ENCODE measurements at regions of chr15 and their contacts with region 1.

Region 1: GRCh38 chr15:81023483-81024264 is 23.0 kb downstream of the TLNRD1 start:
- H3K4me3 Mint-ChIP-seq: peak overlapping the region; percentile 51
- H3K27ac Mint-ChIP-seq: peak overlapping the region; percentile 98
- H3K4me1 Mint-ChIP-seq: peaks cover 52% of the 10 kb centered on the region
- H3K27me3 Mint-ChIP-seq: no peaks in the 10 kb centered on the region

Region 2: GRCh38 chr15:80989518-80990478 is 33.9 kb before region 1 on chr15 and contains the start of gene MESD:
- intact Hi-C with region 1: loop called (anchors 1 kb)
- H3K4me3 Mint-ChIP-seq: peak within 1 kb of the TSS; percentile 90
- H3K27ac Mint-ChIP-seq: peak within 1 kb of the TSS; percentile 97
- H3K4me1 Mint-ChIP-seq: peaks cover 56% of the 10 kb centered on the region
- H3K27me3 Mint-ChIP-seq: peaks cover 3% of the 10 kb centered on the region

Region 3: GRCh38 chr15:81000624-81001151 is 23.0 kb before region 1 on chr15 and contains the start of gene TLNRD1:
- intact Hi-C with region 1: loop called (anchors 1 kb)
- H3K4me3 Mint-ChIP-seq: peak within 1 kb of the TSS; percentile 83
- H3K27ac Mint-ChIP-seq: peak within 1 kb of the TSS; percentile 95
- H3K4me1 Mint-ChIP-seq: peaks cover 40% of the 10 kb centered on the region
- H3K27me3 Mint-ChIP-seq: no peaks in the 10 kb centered on the region

Region 4: GRCh38 chr15:81007428-81008064 is 16.1 kb before region 1 on chr15:
- intact Hi-C with region 1: loop called (anchors 2 kb)
- H3K4me3 Mint-ChIP-seq: no peak overlapping the region
- H3K27ac Mint-ChIP-seq: no peak overlapping the region
- H3K4me1 Mint-ChIP-seq: peaks cover 26% of the 10 kb centered on the region
- H3K27me3 Mint-ChIP-seq: no peaks in the 10 kb centered on the region

Region 5: DNA sequence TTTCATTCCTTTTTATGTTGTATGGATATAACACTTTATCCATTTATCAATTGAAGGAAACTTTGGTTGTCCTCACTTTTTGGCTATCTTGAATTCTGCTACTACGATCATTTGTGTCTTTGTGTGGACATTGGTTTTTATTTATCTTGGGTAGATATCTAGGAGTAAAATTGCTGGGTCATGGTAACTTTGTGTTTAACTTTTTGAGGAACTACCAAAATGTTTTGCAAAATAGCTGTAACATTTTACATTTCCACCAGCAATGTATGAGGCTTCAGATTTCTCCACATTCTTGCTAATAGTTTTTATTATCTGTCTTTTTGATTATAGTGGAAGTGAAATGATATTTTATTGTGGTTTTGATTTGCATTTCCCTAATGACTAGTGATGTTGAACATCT is 32.6 kb after region 1 on chr15:
- intact Hi-C with region 1: loop called (anchors 5 kb)
- H3K4me3 Mint-ChIP-seq: no peak overlapping the region
- H3K27ac Mint-ChIP-seq: peak overlapping the region; percentile 45
- H3K4me1 Mint-ChIP-seq: peaks cover 37% of the 10 kb centered on the region
- H3K27me3 Mint-ChIP-seq: no peaks in the 10 kb centered on the region

Region 6: DNA sequence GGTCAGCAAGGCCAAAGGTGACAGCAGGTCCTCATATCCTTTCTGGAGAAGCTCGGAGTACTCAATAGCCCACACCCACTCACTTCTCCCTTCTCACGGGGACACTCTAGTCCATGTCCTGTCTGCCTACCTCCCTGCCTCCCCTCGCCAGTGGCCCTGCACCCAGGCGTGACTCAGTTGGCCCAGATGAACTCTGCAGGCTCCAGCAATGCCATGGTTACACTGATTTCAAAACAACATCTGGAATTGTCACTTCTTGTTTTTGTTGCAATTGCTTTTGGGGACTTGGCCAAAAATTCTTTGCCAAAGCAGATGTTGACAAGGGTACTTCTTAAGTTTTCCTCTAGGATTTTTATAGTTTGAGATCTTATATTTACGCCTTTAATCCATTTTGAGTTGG is 186.0 kb after region 1 on chr15:
- intact Hi-C with region 1: no loop called
- H3K4me3 Mint-ChIP-seq: no peak overlapping the region
- H3K27ac Mint-ChIP-seq: no peak overlapping the region
- H3K4me1 Mint-ChIP-seq: no peaks in the 10 kb centered on the region
- H3K27me3 Mint-ChIP-seq: peaks cover 1% of the 10 kb centered on the region

Region 7: DNA sequence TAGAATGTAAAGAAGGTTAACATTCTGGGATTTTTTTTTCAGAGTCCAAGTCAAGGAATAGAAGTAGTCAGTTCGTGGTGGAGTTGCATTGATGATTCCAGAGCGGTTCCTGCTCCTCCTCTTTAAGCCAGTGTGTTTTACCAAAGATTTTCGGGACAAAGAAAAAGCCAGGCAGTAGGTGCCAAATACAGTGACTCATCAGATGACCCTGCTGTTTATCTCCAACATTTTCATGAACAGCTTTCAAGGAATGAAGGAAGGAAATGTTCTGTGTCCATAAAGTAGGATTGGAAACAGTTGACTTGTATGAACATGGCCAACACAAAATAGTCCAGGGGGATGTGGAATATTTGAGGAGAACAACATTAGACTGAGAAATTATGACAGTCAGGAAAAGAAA is 492.8 kb after region 1 on chr15:
- intact Hi-C with region 1: no loop called
- H3K4me3 Mint-ChIP-seq: no peak overlapping the region
- H3K27ac Mint-ChIP-seq: no peak overlapping the region
- H3K4me1 Mint-ChIP-seq: no peaks in the 10 kb centered on the region
- H3K27me3 Mint-ChIP-seq: no peaks in the 10 kb centered on the region